Heart right ventricle (tissue), 16 donors: ENCODE measurements at regions of chr18 and their contacts with region 1.

Region 1: GRCh38 chr18:48410095-48410920 is 1.1 kb upstream of the ZBTB7C start:
- DNase-seq: peak; percentile 92 to 94
- ATAC-seq: peak; percentile 98 to 99 (median 99)
- H3K4me3 ChIP-seq: peak overlapping the region; percentile 56 to 92 (median 76)
- H3K27ac ChIP-seq: peak overlapping the region; percentile 2 to 83 (median 70)
- H3K4me1 ChIP-seq: peaks cover 5 to 27% (median 14%) of the 10 kb centered on the region in 9 donors
- H3K27me3 ChIP-seq: peaks cover 0 to 71% (median 44%) of the 10 kb centered on the region in 7 donors
- CTCF ChIP-seq: peak in 1 of 9 donors; percentile 3

Region 2: GRCh38 chr18:48022531-48023329 is 387.6 kb before region 1 on chr18:
- intact Hi-C with region 1: no loop called
- DNase-seq: peak in 1 of 2 donors; percentile 41
- ATAC-seq: peak; percentile 47 to 78 (median 72)
- H3K4me3 ChIP-seq: no peak overlapping the region
- H3K27ac ChIP-seq: no peak overlapping the region
- H3K4me1 ChIP-seq: peaks cover 5 to 26% (median 15%) of the 10 kb centered on the region in 9 donors
- H3K27me3 ChIP-seq: peaks cover 0 to 23% (median 6%) of the 10 kb centered on the region in 7 donors
- CTCF ChIP-seq: peak; percentile 28 to 70 (median 63)

Region 3: GRCh38 chr18:48161191-48161910 is 249.0 kb before region 1 on chr18:
- intact Hi-C with region 1: loop called in 3 of 10 experiments (anchors 5 to 10 kb)
- DNase-seq: peak; percentile 86 to 88
- ATAC-seq: peak; percentile 94 to 97 (median 96)
- H3K4me3 ChIP-seq: peak overlapping the region; percentile 63 to 87 (median 67)
- H3K27ac ChIP-seq: peak overlapping the region; percentile 31 to 95 (median 90)
- H3K4me1 ChIP-seq: peaks cover 6 to 47% (median 27%) of the 10 kb centered on the region in 9 donors
- H3K27me3 ChIP-seq: no peaks in the 10 kb centered on the region
- CTCF ChIP-seq: no peak

Region 4: DNA sequence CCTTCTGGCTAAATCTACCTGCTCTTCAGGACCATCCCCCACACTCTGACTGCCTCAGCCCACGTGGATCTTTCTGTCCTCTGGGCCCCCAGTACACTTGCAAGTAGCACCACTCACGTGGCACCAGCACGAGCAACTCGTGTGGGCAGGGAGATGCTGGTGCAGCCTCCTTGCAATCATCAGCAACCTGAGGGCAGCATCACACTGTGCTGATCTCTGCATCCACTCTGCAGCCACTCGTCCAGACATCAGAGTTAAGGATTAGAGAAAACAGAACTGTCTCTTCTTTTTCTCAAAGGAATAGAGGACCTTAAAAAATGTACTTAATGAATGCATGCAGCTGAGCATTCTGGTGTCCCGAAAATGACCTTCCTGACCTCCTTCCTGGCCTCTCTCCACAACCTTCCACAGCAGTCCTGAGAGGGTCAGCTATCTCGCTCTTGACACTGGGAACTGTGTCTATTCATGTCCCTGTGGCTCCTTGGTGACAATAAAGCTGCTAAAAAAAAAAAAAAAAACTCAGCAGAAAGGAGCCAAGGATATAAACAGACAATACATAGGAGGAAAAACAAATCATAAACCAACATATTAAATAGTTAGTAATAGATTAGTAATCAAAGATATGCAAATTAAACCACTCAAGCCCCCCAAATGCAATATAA is 147.0 kb before region 1 on chr18:
- intact Hi-C with region 1: no loop called
- DNase-seq: no peak
- ATAC-seq: peak in 1 of 8 donors; percentile 49
- H3K4me3 ChIP-seq: no peak overlapping the region
- H3K27ac ChIP-seq: no peak overlapping the region
- H3K4me1 ChIP-seq: peaks cover 0 to 3% (median 0%) of the 10 kb centered on the region in 9 donors
- H3K27me3 ChIP-seq: peaks cover 0 to 2% (median 0%) of the 10 kb centered on the region in 7 donors
- CTCF ChIP-seq: no peak

Region 5: GRCh38 chr18:48330403-48331022 is 79.8 kb before region 1 on chr18:
- intact Hi-C with region 1: loop called in 1 of 10 experiments (anchors 10 kb)
- DNase-seq: no peak
- ATAC-seq: no peak
- H3K4me3 ChIP-seq: no peak overlapping the region
- H3K27ac ChIP-seq: no peak overlapping the region
- H3K4me1 ChIP-seq: peaks cover 0 to 11% (median 0%) of the 10 kb centered on the region in 9 donors
- H3K27me3 ChIP-seq: no peaks in the 10 kb centered on the region
- CTCF ChIP-seq: no peak

Region 6: GRCh38 chr18:48345596-48345995 is 64.7 kb before region 1 on chr18:
- intact Hi-C with region 1: loop called in 1 of 10 experiments (anchors 10 kb)
- DNase-seq: no peak
- ATAC-seq: peak in 1 of 8 donors; percentile 54
- H3K4me3 ChIP-seq: no peak overlapping the region
- H3K27ac ChIP-seq: no peak overlapping the region
- H3K4me1 ChIP-seq: peaks cover 0 to 32% (median 9%) of the 10 kb centered on the region in 9 donors
- H3K27me3 ChIP-seq: no peaks in the 10 kb centered on the region
- CTCF ChIP-seq: peak in 7 of 9 donors; percentile 26 to 45 (median 33)